ENCODE measurements at regions of chr11 and their contacts with region 1.

Region 1: DNA sequence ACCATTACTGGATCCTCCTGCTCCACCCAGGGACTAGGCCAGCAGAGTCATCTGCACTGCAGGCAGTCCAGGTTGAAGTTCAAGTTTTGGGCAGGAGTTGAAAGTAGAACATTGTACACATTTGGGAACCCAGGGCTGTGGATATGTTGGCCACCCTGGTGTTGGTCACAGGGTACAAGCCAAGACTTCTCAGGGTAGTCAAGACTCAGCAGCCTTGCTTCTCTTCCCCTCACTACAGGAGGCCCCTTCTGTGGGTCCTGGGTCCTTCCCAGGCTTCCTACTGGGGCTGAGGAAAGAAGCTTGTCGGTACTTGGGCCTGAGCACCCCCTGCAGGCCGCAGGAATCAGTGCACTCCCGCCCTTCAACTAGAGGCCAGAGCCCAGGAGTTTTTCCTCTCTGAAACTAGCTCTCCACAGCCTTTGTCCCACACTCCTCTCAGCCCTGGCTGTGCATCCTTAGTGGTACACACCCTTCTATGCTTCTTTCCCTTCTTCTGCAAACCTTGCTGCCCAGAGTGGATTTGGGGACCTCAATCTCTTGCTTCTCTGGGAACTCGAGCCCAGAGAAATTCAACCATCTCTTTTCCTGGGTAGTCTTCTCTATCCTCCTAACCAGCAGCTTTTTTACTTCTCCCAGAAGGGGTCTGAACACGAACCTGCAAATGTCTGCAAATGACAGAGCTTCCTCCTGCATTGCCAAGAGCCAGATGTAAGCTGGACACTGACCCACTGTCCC is 2.6 kb upstream of the HPX start:
- DNase-seq: peak; percentile 22 to 79 (median 60)
- ATAC-seq: peak; percentile 94
- H3K4me3 ChIP-seq: no peak overlapping the region
- H3K4me3 Mint-ChIP-seq: no peak overlapping the region
- H3K27ac ChIP-seq: no peak overlapping the region
- H3K27ac Mint-ChIP-seq: no peak overlapping the region
- H3K4me1 ChIP-seq: peaks cover 21% of the 10 kb centered on the region
- H3K4me1 Mint-ChIP-seq: no peaks in the 10 kb centered on the region
- H3K27me3 ChIP-seq: no peaks in the 10 kb centered on the region
- H3K27me3 Mint-ChIP-seq: no peaks in the 10 kb centered on the region
- CTCF ChIP-seq: peak; percentile 82

Region 2: GRCh38 chr11:6251120-6251733 is 192.2 kb before region 1 on chr11:
- CTCF ChIA-PET with region 1: interaction called, 4 read pairs
- POLR2A ChIA-PET with region 1: no interaction called
- intact Hi-C with region 1: loop called in 1 of 2 experiments (anchors 10 kb)
- DNase-seq: peak in 7 of 9 experiments; percentile 14 to 59 (median 47)
- ATAC-seq: peak; percentile 83
- H3K4me3 ChIP-seq: no peak overlapping the region
- H3K4me3 Mint-ChIP-seq: no peak overlapping the region
- H3K27ac ChIP-seq: no peak overlapping the region
- H3K27ac Mint-ChIP-seq: no peak overlapping the region
- H3K4me1 ChIP-seq: no peaks in the 10 kb centered on the region
- H3K4me1 Mint-ChIP-seq: no peaks in the 10 kb centered on the region
- H3K27me3 ChIP-seq: no peaks in the 10 kb centered on the region
- H3K27me3 Mint-ChIP-seq: no peaks in the 10 kb centered on the region
- CTCF ChIP-seq: peak; percentile 56

Region 3: GRCh38 chr11:6389921-6390724 is 53.3 kb before region 1 on chr11 and contains the start of gene SMPD1:
- CTCF ChIA-PET with region 1: interaction called, 733 read pairs
- POLR2A ChIA-PET with region 1: interaction called, 5 read pairs
- intact Hi-C with region 1: loop called in 1 of 2 experiments (anchors 2 kb)
- DNase-seq: peak; percentile 90 to 97 (median 94)
- ATAC-seq: peak; percentile 88
- H3K4me3 ChIP-seq: peak within 1 kb of the TSS; percentile 84 to 90
- H3K4me3 Mint-ChIP-seq: peak within 1 kb of the TSS; percentile 93
- H3K27ac ChIP-seq: peak within 1 kb of the TSS; percentile 85 to 95
- H3K27ac Mint-ChIP-seq: peak within 1 kb of the TSS; percentile 98
- H3K4me1 ChIP-seq: peaks cover 52% of the 10 kb centered on the region
- H3K4me1 Mint-ChIP-seq: peaks cover 68% of the 10 kb centered on the region
- H3K27me3 ChIP-seq: no peaks in the 10 kb centered on the region
- H3K27me3 Mint-ChIP-seq: no peaks in the 10 kb centered on the region
- CTCF ChIP-seq: no peak
- total RNA-seq, gene SMPD1: 53.4 to 53.7 TPM

Region 4: GRCh38 chr11:6419009-6419631 is 24.3 kb before region 1 on chr11 and contains the start of gene APBB1:
- CTCF ChIA-PET with region 1: interaction called, 27 read pairs
- POLR2A ChIA-PET with region 1: no interaction called
- intact Hi-C with region 1: loop called in 1 of 2 experiments (anchors 2 kb)
- DNase-seq: peak; percentile 49 to 88 (median 77)
- ATAC-seq: peak; percentile 69
- H3K4me3 ChIP-seq: peak within 1 kb of the TSS; percentile 51 to 81
- H3K4me3 Mint-ChIP-seq: peak within 1 kb of the TSS; percentile 84
- H3K27ac ChIP-seq: peak within 1 kb of the TSS; percentile 48 to 82
- H3K27ac Mint-ChIP-seq: peak within 1 kb of the TSS; percentile 89
- H3K4me1 ChIP-seq: peaks cover 46% of the 10 kb centered on the region
- H3K4me1 Mint-ChIP-seq: peaks cover 10% of the 10 kb centered on the region
- H3K27me3 ChIP-seq: no peaks in the 10 kb centered on the region
- H3K27me3 Mint-ChIP-seq: peaks cover 3% of the 10 kb centered on the region
- CTCF ChIP-seq: no peak
- total RNA-seq, gene APBB1: 130 to 147 TPM

Region 5: GRCh38 chr11:6473481-6474422 is 30.3 kb after region 1 on chr11 and contains the start of gene TRIM3:
- CTCF ChIA-PET with region 1: interaction called, 20 read pairs
- POLR2A ChIA-PET with region 1: no interaction called
- intact Hi-C with region 1: no loop called
- DNase-seq: peak; percentile 37 to 86 (median 74)
- ATAC-seq: peak; percentile 82
- H3K4me3 ChIP-seq: peak within 1 kb of the TSS; percentile 72 to 74
- H3K4me3 Mint-ChIP-seq: peak within 1 kb of the TSS; percentile 88
- H3K27ac ChIP-seq: peak within 1 kb of the TSS; percentile 37 to 78
- H3K27ac Mint-ChIP-seq: peak within 1 kb of the TSS; percentile 86
- H3K4me1 ChIP-seq: peaks cover 13% of the 10 kb centered on the region
- H3K4me1 Mint-ChIP-seq: peaks cover 22% of the 10 kb centered on the region
- H3K27me3 ChIP-seq: no peaks in the 10 kb centered on the region
- H3K27me3 Mint-ChIP-seq: no peaks in the 10 kb centered on the region
- CTCF ChIP-seq: no peak
- total RNA-seq, gene TRIM3: 14.5 to 18.3 TPM

Region 6: GRCh38 chr11:6505577-6506240 is 62.3 kb after region 1 on chr11:
- CTCF ChIA-PET with region 1: interaction called, 17 read pairs
- POLR2A ChIA-PET with region 1: no interaction called
- intact Hi-C with region 1: loop called in 1 of 2 experiments (anchors 2 kb)
- DNase-seq: peak in 3 of 9 experiments; percentile 9 to 64 (median 51)
- ATAC-seq: peak; percentile 61
- H3K4me3 ChIP-seq: no peak overlapping the region
- H3K4me3 Mint-ChIP-seq: no peak overlapping the region
- H3K27ac ChIP-seq: no peak overlapping the region
- H3K27ac Mint-ChIP-seq: no peak overlapping the region
- H3K4me1 ChIP-seq: no peaks in the 10 kb centered on the region
- H3K4me1 Mint-ChIP-seq: peaks cover 4% of the 10 kb centered on the region
- H3K27me3 ChIP-seq: no peaks in the 10 kb centered on the region
- H3K27me3 Mint-ChIP-seq: no peaks in the 10 kb centered on the region
- CTCF ChIP-seq: peak; percentile 73

Measured in CD8-positive, alpha-beta T cell (primary cell).